AG04450 (cell line): ENCODE measurements at regions of chrX and their contacts with region 1.

Region 1: DNA sequence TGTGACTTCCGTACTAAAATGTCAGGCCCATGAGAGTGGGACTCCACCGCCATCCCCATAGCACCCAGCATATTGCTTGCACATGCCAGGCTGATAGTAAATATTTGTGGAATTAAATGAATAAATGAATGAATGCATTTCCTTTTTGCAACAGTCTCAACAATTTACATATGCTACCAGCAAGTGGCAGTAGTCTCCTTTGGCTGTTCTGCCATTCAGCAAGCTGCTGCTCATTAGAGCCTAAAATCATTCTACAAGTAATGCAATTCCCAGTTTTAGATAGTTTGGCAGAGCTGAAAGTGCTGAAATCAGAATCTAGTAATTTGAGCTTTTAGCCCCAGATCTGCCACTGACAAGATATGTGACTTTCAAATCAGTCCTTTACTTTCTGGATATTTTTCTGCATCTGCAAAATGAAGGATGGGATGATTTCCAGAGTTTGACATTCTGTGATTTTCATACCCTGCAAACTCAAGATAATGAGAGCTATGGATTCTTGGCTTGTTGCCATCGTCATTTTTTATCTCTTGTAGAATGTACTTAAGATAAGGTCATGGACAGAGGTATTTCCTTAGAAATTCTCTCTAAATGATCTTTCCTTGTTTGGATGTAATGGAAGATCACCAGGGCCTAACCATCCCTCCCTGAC is 35.7 kb upstream of the INTS6L start:
- DNase-seq: no peak
- H3K4me3 ChIP-seq: no peak overlapping the region
- H3K27ac ChIP-seq: no peak overlapping the region
- H3K27me3 ChIP-seq: no peaks in the 10 kb centered on the region
- CTCF ChIP-seq: peak; percentile 65

Region 2: GRCh38 chrX:135396109-135396508 is 88.7 kb before region 1 on chrX:
- CTCF ChIA-PET with region 1: no interaction called
- POLR2A ChIA-PET with region 1: no interaction called
- DNase-seq: no peak
- H3K4me3 ChIP-seq: no peak overlapping the region
- H3K27ac ChIP-seq: no peak overlapping the region
- H3K27me3 ChIP-seq: no peaks in the 10 kb centered on the region
- CTCF ChIP-seq: no peak

Region 3: DNA sequence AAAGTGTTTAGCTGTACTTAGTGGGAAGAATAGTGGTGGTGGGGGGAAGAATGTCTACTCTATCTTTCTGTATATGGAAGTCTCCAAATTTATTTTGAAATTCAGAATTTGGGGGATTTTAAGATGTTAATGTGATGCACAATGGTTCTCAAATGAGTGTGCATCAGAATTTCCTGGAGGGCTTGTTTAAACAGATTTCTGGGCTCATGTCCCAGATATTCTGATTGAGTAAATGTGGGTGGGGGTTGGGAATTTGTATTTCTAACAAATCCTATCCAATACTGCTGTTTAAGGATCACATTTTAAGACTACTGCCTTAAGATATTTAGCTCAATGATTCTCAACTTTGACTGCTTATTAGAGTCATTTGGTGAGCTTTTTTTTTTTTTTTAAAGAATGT is 20.6 kb after region 1 on chrX:
- CTCF ChIA-PET with region 1: no interaction called
- POLR2A ChIA-PET with region 1: no interaction called
- DNase-seq: no peak
- H3K4me3 ChIP-seq: no peak overlapping the region
- H3K27ac ChIP-seq: no peak overlapping the region
- H3K27me3 ChIP-seq: no peaks in the 10 kb centered on the region
- CTCF ChIP-seq: no peak

Region 4: DNA sequence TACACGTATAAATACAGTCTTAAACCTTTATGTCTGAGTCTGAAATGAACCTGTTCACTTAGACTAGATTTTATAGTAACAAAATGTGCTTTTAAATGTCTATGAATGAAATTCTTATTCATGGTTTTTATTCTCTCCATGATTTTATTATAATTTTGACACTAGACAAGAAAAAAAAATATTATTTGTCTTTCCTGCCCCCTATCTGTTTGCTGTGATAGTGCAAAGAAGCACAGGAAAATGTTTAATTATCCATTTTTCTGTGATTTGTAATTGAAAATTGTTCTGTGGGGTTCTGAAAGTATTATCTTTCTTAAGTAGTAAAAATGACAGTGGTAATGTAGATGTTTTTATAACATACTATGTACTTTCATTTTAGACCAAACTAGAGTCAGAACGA is 87.7 kb after region 1 on chrX:
- CTCF ChIA-PET with region 1: interaction called, 10 read pairs
- POLR2A ChIA-PET with region 1: no interaction called
- DNase-seq: no peak
- H3K4me3 ChIP-seq: no peak overlapping the region
- H3K27ac ChIP-seq: no peak overlapping the region
- H3K27me3 ChIP-seq: no peaks in the 10 kb centered on the region
- CTCF ChIP-seq: peak; percentile 54

Region 5: DNA sequence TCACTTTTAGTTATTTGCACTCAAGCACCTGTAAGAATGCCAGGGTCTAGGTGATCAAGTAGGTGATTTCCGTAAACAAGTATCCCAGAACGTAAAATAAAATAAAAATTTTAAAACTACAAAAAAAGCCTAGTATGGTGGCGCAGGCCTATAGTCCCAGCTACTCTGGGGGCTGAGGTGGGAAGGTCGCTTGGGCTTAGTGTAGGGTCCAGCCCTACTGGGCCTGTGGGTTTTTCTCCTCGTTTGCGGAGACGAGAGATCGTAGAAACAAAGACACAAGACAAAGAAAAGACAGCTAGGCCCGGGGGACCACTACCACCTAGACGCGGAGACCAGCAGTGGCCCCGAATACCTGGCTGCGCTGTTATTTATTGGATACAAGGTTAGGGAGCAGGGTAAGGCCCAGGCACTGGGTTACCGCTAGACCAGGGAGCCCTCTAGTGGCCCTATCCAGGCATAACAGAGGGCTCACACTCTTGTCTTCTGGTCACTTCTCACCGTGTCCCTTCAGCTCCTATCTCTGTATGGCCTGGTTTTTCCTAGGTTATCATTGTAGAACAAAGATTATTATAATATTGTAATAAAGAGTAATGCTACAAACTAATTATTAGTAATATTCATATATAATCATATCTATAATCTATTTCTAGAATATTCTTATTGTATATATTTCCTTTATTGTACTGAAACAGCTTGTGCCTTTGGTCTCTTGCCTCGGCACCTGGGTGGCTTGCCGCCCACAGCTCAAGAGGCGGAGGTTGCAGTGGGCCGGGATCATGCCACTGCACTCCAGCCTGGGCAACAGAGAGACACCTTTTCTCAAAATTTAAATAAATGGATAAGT is 447.1 kb after region 1 on chrX:
- CTCF ChIA-PET with region 1: interaction called, 10 read pairs
- POLR2A ChIA-PET with region 1: no interaction called
- DNase-seq: no peak
- H3K4me3 ChIP-seq: no peak overlapping the region
- H3K27ac ChIP-seq: no peak overlapping the region
- H3K27me3 ChIP-seq: no peaks in the 10 kb centered on the region
- CTCF ChIP-seq: peak; percentile 65